ENCODE measurements at regions of chr19 and their contacts with region 1.

Region 1: DNA sequence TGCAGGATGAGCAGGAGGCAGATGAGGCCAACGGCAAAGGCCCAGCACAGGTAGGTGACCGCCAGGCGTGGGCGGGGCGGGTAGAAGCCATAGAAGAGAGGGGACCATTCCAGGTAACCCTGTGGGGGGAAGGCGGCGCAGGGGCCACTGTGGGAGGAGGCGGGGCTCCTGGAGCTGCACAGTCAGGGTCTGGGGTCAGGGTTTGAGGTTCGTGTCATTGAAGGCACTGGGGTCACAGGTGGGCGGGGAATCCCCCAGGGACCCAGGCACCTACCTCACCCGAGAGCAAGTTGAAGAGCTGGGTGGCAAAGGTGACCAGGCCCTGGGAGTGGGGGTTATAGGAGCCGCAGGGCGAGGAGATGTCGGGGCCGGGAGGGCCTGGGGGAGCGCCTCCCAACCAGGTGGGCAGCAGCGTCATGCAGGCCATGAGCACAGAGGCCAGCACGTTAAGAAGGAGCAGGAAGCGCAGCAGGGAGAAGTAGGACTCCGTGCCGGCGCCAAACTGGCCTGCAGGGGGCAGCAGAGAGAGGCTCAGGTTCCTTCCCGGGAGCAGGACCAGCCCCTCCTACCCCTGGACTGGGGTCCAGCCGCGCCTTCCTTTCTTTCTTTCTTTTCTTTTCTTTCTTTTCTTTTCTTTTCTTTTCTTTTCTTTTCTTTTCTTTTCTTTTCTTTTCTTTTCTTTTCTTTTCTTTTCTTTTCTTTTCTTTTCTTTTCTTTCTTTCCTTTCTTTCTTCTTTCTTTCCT is 4.6 kb downstream of the TMC4 start:
- DNase-seq: no peak
- H3K4me3 ChIP-seq: no peak overlapping the region
- H3K27ac ChIP-seq: no peak overlapping the region
- H3K27me3 ChIP-seq: no peaks in the 10 kb centered on the region
- CTCF ChIP-seq: peak; percentile 89

Region 2: GRCh38 chr19:54231077-54231931 is 63.0 kb after region 1 on chr19:
- CTCF ChIA-PET with region 1: interaction called, 10 read pairs
- POLR2A ChIA-PET with region 1: interaction called, 4 read pairs
- DNase-seq: peak; percentile 38
- H3K4me3 ChIP-seq: no peak overlapping the region
- H3K27ac ChIP-seq: no peak overlapping the region
- H3K27me3 ChIP-seq: peaks cover 19% of the 10 kb centered on the region
- CTCF ChIP-seq: peak; percentile 94

Region 3: GRCh38 chr19:54390942-54391577 is 222.7 kb after region 1 on chr19:
- CTCF ChIA-PET with region 1: interaction called, 14 read pairs
- POLR2A ChIA-PET with region 1: no interaction called
- DNase-seq: peak; percentile 16
- H3K4me3 ChIP-seq: no peak overlapping the region
- H3K27ac ChIP-seq: no peak overlapping the region
- H3K27me3 ChIP-seq: peaks cover 5% of the 10 kb centered on the region
- CTCF ChIP-seq: peak; percentile 74

Measured in AG04450 (cell line).